GM12878 (cell line): ENCODE measurements at regions of chr20 and their contacts with region 1.

Region 1: GRCh38 chr20:23143098-23143497 is 57.0 kb upstream of the CD93 start:
- DNase-seq: no peak
- ATAC-seq: no peak
- H3K4me3 ChIP-seq: no peak overlapping the region
- H3K27ac ChIP-seq: no peak overlapping the region; the same call in 1 of the 2 replicates
- H3K4me1 ChIP-seq: peaks cover 36% of the 10 kb centered on the region
- H3K27me3 ChIP-seq: no peaks in the 10 kb centered on the region
- CTCF ChIP-seq: no peak
- EP300 ChIP-seq: no peak
- POLR2A ChIP-seq: no peak
- RAD21 ChIP-seq: 0 out of 2 replicates have a peak, but pooled peaks have one; percentile 1

Region 2: DNA sequence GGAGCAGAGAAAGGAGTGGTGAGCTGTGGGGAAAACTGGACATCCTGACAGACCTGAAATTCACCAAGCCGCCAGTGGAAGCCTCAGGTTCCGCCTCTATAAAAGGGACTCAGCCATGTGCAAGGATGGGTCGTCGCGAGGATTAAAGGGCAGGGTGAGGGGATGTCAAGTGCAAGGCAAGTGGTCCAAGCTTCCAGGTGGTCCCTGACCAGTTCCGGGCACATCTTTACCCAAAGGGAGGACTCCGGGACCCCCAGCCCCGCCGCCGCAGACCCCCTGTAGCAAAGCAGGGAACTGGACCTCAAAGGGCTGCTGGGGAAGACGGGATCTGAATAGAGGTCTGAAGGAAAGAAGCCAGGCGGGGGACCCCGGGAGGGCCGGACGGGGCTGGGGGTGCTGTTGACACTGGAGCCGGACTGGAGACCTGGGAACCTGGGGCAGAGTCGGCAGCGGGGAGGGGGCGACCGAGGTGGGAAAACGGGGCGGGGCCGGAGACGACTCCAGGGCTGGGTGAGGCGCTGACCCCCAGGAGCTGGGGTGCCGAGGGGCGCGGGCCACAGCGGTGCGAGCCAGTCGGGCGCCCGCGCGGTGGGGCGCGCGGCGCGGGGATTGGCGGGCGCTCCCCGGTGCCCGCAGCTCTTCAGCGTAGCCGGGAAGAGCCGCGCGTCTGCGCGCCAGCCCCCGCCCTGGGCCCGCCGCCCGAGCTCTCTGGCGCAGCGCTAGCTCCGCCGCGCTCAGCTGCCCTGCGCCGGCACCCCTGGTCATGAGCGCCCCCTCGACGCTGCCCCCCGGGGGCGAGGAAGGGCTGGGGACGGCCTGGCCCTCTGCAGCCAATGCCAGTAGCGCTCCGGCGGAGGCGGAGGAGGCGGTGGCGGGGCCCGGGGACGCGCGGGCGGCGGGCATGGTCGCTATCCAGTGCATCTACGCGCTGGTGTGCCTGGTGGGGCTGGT is 108.1 kb before region 1 on chr20 and contains the start of gene SSTR4:
- CTCF ChIA-PET with region 1: no interaction called
- POLR2A ChIA-PET with region 1: no interaction called
- RAD21 ChIA-PET with region 1: no interaction called
- SMC1A ChIA-PET with region 1: no interaction called
- in situ Hi-C with region 1: no loop called
- intact Hi-C with region 1: no loop called
- DNase-seq: no peak
- ATAC-seq: no peak
- H3K4me3 ChIP-seq: no peak within 1 kb of the TSS
- H3K27ac ChIP-seq: no peak within 1 kb of the TSS
- H3K4me1 ChIP-seq: no peaks in the 10 kb centered on the region
- H3K27me3 ChIP-seq: peaks cover 0 to 2% of the 10 kb centered on the region in 2 experiments; a peak in 1 of 4 replicates
- CTCF ChIP-seq: no peak
- EP300 ChIP-seq: no peak
- POLR2A ChIP-seq: no peak
- RAD21 ChIP-seq: no peak
- polyA plus RNA-seq, gene SSTR4: not detected

Region 3: GRCh38 chr20:23094927-23095326 is 48.2 kb before region 1 on chr20:
- CTCF ChIA-PET with region 1: no interaction called
- POLR2A ChIA-PET with region 1: no interaction called
- RAD21 ChIA-PET with region 1: interaction called, 3 read pairs
- SMC1A ChIA-PET with region 1: interaction called, 10 read pairs
- in situ Hi-C with region 1: no loop called
- intact Hi-C with region 1: no loop called
- DNase-seq: no peak
- ATAC-seq: no peak
- H3K4me3 ChIP-seq: no peak overlapping the region
- H3K27ac ChIP-seq: no peak overlapping the region
- H3K4me1 ChIP-seq: no peaks in the 10 kb centered on the region
- H3K27me3 ChIP-seq: peaks cover 0 to 6% of the 10 kb centered on the region in 2 experiments; a peak in 1 of 4 replicates
- CTCF ChIP-seq: no peak
- EP300 ChIP-seq: no peak
- POLR2A ChIP-seq: no peak
- RAD21 ChIP-seq: no peak

Region 4: DNA sequence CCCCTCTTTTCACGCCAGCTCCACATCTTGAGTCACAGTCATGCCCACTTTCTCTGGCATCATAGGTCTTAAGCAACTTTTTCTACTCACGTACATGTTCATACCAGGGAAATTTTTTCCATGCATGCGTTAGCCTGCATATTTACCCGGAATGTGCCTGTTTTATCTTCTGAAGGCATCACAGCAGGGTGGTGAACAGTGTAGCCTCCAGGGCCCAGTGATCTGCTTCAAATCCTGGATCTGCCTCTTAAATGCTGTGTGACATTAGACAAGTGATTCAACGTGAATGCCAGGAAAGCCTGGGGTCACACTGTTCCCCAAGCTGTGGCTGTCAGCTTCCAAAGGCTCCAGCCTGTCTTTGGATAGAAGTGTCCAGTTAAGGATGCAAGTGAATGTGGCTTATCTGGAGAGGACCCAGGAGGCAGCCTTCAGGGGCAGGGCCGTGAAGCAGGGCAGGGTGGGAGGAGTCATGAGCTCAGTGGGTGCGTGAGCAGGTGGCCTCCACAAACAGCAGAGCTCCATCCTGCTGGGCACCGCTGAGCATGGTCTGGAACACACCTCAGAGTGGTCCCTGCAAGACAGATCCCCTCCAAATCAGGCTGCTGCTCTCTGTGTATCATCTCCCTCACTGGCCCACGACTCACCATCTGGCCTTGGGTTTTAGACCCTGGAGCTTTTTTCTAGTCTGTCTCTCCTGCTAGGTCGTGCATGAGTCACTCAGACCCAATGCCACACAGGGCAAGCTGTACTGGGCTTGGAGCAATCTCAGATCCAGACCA is 26.6 kb before region 1 on chr20:
- CTCF ChIA-PET with region 1: interaction called, 5 read pairs
- POLR2A ChIA-PET with region 1: interaction called, 5 read pairs
- RAD21 ChIA-PET with region 1: interaction called, 16 read pairs
- SMC1A ChIA-PET with region 1: interaction called, 20 read pairs
- in situ Hi-C with region 1: no loop called
- intact Hi-C with region 1: no loop called
- DNase-seq: no peak
- ATAC-seq: peak; percentile 53
- H3K4me3 ChIP-seq: no peak overlapping the region
- H3K27ac ChIP-seq: no peak overlapping the region
- H3K4me1 ChIP-seq: peaks cover 27% of the 10 kb centered on the region
- H3K27me3 ChIP-seq: no peaks in the 10 kb centered on the region; a peak in 2 of 4 replicates
- CTCF ChIP-seq: no peak
- EP300 ChIP-seq: no peak
- POLR2A ChIP-seq: no peak
- RAD21 ChIP-seq: no peak

Region 5: DNA sequence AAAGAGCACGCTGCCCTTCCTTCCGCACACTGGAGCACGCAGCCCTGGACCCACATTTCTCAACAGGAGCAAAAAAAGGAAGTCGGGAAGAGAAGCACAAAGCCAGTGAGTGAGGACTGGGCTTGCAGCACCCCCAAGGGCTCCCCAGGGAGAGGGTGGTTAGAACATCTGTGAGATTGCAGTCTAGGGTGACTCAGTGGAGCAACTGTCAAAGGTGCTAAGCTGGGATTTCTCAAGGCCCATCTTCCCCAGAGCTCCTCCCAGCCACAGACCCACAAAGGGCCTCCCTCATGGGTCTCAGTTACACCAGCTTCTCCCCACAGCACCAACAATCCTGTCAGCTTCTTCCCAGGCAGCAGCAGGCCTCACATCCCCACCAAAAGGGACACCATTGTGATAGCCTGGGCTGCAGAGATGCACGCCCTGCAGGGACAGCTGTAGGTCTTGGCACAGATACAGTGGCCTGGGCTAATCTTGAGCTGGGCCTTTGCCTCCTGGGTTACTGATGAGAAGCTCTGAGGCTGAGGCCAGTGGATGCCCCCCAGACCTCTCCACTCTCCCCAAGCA is 17.4 kb before region 1 on chr20:
- CTCF ChIA-PET with region 1: interaction called, 11 read pairs
- POLR2A ChIA-PET with region 1: interaction called, 7 read pairs
- RAD21 ChIA-PET with region 1: interaction called, 16 read pairs
- SMC1A ChIA-PET with region 1: interaction called, 28 read pairs
- in situ Hi-C with region 1: no loop called
- intact Hi-C with region 1: no loop called
- DNase-seq: no peak
- ATAC-seq: peak; percentile 28
- H3K4me3 ChIP-seq: no peak overlapping the region
- H3K27ac ChIP-seq: no peak overlapping the region
- H3K4me1 ChIP-seq: peaks cover 14% of the 10 kb centered on the region
- H3K27me3 ChIP-seq: no peaks in the 10 kb centered on the region
- CTCF ChIP-seq: no peak
- EP300 ChIP-seq: no peak
- POLR2A ChIP-seq: no peak
- RAD21 ChIP-seq: no peak

Region 6: GRCh38 chr20:23161968-23162696 is 19.0 kb after region 1 on chr20:
- CTCF ChIA-PET with region 1: interaction called, 10 read pairs
- POLR2A ChIA-PET with region 1: interaction called, 5 read pairs
- RAD21 ChIA-PET with region 1: interaction called, 8 read pairs
- SMC1A ChIA-PET with region 1: interaction called, 58 read pairs
- in situ Hi-C with region 1: no loop called
- intact Hi-C with region 1: no loop called
- DNase-seq: no peak
- ATAC-seq: peak; percentile 52
- H3K4me3 ChIP-seq: no peak overlapping the region
- H3K27ac ChIP-seq: no peak overlapping the region
- H3K4me1 ChIP-seq: peaks cover 31% of the 10 kb centered on the region
- H3K27me3 ChIP-seq: no peaks in the 10 kb centered on the region
- CTCF ChIP-seq: no peak
- EP300 ChIP-seq: no peak
- POLR2A ChIP-seq: no peak
- RAD21 ChIP-seq: no peak

Region 7: GRCh38 chr20:23374441-23374840 is 231.3 kb after region 1 on chr20:
- CTCF ChIA-PET with region 1: no interaction called
- POLR2A ChIA-PET with region 1: no interaction called
- RAD21 ChIA-PET with region 1: no interaction called
- SMC1A ChIA-PET with region 1: no interaction called
- in situ Hi-C with region 1: no loop called
- intact Hi-C with region 1: no loop called
- DNase-seq: no peak
- ATAC-seq: no peak
- H3K4me3 ChIP-seq: no peak overlapping the region
- H3K27ac ChIP-seq: no peak overlapping the region
- H3K4me1 ChIP-seq: no peaks in the 10 kb centered on the region
- H3K27me3 ChIP-seq: no peaks in the 10 kb centered on the region
- CTCF ChIP-seq: no peak
- EP300 ChIP-seq: no peak
- POLR2A ChIP-seq: no peak
- RAD21 ChIP-seq: no peak

Region 8: GRCh38 chr20:23391707-23392310 is 248.7 kb after region 1 on chr20:
- CTCF ChIA-PET with region 1: no interaction called
- POLR2A ChIA-PET with region 1: no interaction called
- RAD21 ChIA-PET with region 1: no interaction called
- SMC1A ChIA-PET with region 1: no interaction called
- in situ Hi-C with region 1: no loop called
- intact Hi-C with region 1: no loop called
- DNase-seq: no peak
- ATAC-seq: no peak
- H3K4me3 ChIP-seq: no peak overlapping the region
- H3K27ac ChIP-seq: no peak overlapping the region
- H3K4me1 ChIP-seq: no peaks in the 10 kb centered on the region
- H3K27me3 ChIP-seq: no peaks in the 10 kb centered on the region
- CTCF ChIP-seq: no peak
- EP300 ChIP-seq: no peak
- POLR2A ChIP-seq: no peak
- RAD21 ChIP-seq: no peak